AG04449 (cell line): ENCODE measurements at regions of chr10 and their contacts with region 1.

Region 1: GRCh38 chr10:24209946-24210491 is 1.1 kb downstream of the KIAA1217 start:
- DNase-seq: peak; percentile 34
- H3K4me3 ChIP-seq: peak overlapping the region; percentile 59
- CTCF ChIP-seq: no peak

Region 2: DNA sequence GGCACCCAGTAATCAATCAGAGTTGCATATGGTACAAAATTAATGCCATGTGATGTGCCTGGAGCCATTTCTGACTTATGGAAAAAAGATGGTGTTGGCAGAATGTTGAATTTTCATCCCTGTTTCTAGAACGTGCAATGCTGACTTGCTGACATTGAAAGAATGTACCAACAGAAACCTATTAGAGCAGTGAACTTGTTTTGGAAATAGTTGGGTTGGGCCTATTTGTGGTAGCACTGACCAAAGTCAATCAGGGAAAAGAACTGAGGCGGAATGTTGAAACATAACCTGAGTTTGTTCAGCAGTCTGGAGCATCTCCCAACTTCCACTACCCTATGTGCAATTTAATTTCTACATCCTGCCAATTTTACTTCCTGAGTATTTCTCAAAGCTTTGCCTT is 12.8 kb before region 1 on chr10:
- CTCF ChIA-PET with region 1: interaction called, 24 read pairs
- POLR2A ChIA-PET with region 1: no interaction called
- DNase-seq: no peak
- H3K4me3 ChIP-seq: no peak overlapping the region
- CTCF ChIP-seq: no peak

Region 3: GRCh38 chr10:25465582-25466372 is 1255.8 kb after region 1 on chr10:
- CTCF ChIA-PET with region 1: no interaction called
- POLR2A ChIA-PET with region 1: no interaction called
- DNase-seq: no peak
- H3K4me3 ChIP-seq: no peak overlapping the region
- CTCF ChIP-seq: no peak